ENCODE measurements at regions of chr5 and their contacts with region 1.

Region 1: DNA sequence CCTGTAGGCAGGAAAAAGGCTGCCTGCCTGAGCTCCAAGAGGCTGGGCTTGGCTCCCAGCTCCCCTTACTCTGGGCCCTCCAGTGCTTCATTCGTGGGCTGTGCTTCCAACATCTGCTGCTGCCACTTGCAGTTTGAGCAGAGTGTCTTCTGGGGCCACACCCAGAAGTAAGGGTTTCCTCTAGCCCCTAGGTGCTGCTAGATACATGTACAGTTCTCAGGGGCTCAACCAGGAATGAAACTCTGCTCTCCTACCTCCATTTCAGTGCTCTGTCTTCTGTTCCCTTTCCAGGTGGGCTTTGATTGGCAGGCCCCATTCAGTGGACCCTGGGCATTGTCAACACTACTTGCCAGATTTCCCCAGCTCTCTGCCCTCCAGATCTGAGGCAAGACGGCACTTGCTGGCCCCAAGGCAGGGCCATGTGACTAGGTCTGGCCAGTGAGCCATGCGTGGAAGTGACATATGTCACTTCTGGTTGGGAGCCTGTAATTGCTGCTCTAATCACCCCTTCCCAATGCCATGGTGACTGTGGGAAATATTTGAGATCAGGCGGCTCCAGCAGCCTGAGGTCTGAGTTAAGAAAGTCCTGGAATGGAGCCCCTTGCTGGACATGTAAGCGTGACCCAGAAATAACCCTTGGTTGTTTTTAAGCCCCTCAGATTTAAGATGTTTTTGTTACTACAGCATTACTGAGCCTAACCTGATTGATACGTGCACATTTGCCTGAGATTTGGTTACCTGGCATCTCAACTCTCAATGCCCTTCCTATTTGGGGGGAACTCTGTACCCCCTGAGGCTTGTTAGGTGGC is 9.4 kb upstream of the BOD1 start:
- DNase-seq: no peak
- ATAC-seq: peak in 2 of 4 donors; percentile 44 to 59
- H3K4me3 ChIP-seq: no peak overlapping the region
- H3K27ac ChIP-seq: no peak overlapping the region
- H3K4me1 ChIP-seq: no peaks in the 10 kb centered on the region
- H3K27me3 ChIP-seq: no peaks in the 10 kb centered on the region
- CTCF ChIP-seq: no peak

Region 2: DNA sequence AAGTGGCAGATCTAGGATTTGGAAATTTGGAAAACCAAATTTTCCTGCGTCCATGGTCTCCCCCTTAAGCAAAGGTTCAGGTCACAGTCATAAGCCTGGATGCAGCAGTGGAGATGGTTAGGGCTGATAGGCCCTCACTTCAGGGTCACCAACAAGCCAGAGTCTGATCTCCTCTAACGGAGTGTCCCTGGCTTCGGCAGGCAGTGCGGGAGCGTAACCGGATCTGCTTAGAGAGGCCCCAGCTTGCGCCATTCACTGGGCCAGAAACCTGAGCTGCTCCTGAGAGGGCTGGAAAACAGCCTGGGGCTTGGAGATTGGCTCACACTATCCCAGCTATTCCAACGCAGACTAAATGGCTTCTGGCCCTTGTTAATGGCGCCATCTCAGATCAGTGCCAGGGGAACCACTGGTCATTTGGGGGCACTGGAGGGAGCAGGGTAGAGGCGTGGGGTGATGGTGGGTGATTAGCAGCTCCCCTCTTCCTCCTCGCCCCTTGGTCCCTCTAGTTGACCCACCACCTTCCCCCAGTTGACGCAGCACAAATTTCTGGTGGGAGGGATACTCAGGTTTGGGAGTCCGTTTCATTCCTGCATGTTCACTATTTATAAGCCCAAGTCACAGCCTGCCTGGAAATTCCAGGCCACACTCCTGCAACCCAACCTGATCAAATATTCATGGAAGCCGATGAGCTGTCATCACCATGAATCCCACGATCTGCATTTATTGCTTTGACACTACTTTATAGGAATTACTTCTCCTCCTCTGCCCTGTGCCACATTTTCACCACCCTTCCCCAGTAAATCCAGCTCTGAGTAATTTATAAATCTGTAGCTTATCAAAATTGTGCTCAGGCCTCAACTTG is 127.6 kb after region 1 on chr5:
- intact Hi-C with region 1: loop called in 1 of 3 experiments (anchors 10 kb)
- DNase-seq: no peak
- ATAC-seq: no peak
- H3K4me3 ChIP-seq: no peak overlapping the region
- H3K27ac ChIP-seq: no peak overlapping the region
- H3K4me1 ChIP-seq: no peaks in the 10 kb centered on the region
- H3K27me3 ChIP-seq: no peaks in the 10 kb centered on the region
- CTCF ChIP-seq: no peak

Region 3: DNA sequence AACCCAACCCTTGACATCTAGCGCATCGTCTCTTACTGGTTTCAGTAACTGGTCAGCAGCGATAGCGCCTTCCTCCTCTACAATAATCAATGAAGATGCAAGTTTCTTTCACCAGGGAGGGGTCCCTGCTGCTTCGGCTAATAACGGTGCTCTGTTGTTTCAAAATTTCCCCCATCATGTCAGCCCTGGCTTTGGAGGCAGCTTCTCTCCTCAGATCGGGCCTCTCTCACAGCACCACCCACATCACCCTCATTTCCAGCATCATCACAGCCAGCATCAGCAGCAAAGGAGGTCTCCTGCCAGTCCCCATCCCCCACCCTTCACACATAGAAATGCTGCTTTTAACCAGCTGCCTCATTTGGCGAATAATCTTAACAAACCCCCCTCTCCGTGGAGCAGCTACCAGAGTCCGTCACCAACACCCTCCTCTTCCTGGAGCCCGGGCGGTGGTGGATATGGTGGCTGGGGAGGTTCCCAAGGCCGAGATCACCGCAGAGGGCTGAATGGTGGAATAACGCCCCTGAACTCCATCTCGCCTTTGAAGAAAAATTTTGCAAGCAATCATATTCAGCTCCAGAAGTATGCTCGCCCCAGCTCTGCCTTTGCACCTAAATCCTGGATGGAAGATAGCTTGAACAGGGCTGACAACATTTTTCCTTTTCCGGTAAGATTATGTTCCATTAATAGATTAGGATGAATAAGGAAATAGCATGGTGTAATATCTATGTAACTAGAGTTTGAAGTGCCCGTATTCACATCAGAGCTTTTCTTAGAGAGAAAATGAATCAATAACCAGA is 264.5 kb after region 1 on chr5:
- intact Hi-C with region 1: loop called in 1 of 3 experiments (anchors 10 kb)
- DNase-seq: peak; percentile 25 to 70 (median 50)
- ATAC-seq: peak in 3 of 4 donors; percentile 4 to 9 (median 7)
- H3K4me3 ChIP-seq: peak overlapping the region; percentile 2 to 82 (median 71)
- H3K27ac ChIP-seq: peak overlapping the region in 3 of 4 donors; percentile 59 to 97 (median 89)
- H3K4me1 ChIP-seq: peaks cover 4 to 27% (median 19%) of the 10 kb centered on the region in 3 donors
- H3K27me3 ChIP-seq: no peaks in the 10 kb centered on the region
- CTCF ChIP-seq: no peak

Region 4: DNA sequence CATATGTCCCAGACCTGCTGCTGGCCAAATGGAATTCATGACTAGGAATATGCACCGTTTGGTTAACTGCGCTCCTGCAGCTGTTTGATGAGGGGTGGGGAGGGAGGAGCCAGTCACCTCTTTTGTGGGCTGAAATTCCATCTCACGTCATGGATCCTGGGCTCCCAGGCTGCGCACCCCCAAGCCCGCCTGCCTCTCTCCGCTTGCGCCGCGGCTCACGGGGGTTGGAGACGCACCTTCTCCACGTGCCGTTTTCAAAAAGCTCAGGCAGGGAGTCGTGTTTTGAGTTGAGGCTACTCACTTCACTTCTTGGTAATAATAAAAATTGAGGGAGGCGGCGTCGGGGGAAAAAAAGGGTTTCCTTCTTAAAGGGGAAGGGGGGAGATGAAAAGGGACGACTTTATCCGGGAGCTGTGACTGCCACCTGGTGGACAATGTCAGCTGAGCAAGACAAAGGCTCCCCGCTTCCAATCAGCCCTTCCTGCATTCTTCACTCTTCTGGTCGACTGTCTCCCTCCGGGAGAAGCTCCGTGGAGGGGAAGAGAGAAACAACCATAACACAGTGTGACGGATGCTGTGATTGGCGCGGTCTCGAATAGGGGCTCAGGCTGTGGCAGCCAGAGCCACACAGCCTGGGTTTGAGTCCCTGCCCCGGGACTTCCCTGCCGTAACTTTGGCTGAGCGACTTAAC is 347.2 kb after region 1 on chr5:
- intact Hi-C with region 1: loop called in 1 of 3 experiments (anchors 5 kb)
- DNase-seq: peak; percentile 83 to 89 (median 86)
- ATAC-seq: peak; percentile 92 to 97 (median 95)
- H3K4me3 ChIP-seq: peak overlapping the region; percentile 26 to 54 (median 44)
- H3K27ac ChIP-seq: peak overlapping the region in 2 of 4 donors; percentile 71 to 74
- H3K4me1 ChIP-seq: peaks cover 0 to 3% (median 0%) of the 10 kb centered on the region in 3 donors
- H3K27me3 ChIP-seq: no peaks in the 10 kb centered on the region
- CTCF ChIP-seq: peak; percentile 77 to 85 (median 80)

Region 5: DNA sequence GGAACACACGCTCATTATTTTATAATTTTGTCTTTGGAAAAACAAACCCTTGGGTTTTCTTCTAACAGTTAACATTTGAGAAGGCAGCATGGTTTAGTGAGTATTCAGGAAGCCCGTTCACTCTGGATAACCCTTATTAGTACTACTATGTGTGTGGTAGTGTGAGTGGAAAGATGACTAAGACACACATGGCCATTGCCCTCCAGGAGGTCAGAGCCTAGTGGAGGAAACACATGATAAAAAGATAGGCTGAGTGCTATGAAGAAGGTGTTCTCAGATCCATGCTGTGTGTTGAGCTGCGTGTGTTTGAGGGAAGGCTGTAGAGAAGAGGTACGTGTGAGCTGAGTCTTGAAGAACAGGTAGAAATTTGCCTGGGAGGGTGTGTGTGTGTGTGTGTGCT is 371.4 kb after region 1 on chr5:
- intact Hi-C with region 1: no loop called
- DNase-seq: no peak
- ATAC-seq: no peak
- H3K4me3 ChIP-seq: no peak overlapping the region
- H3K27ac ChIP-seq: no peak overlapping the region
- H3K4me1 ChIP-seq: no peaks in the 10 kb centered on the region
- H3K27me3 ChIP-seq: no peaks in the 10 kb centered on the region
- CTCF ChIP-seq: no peak

Region 6: GRCh38 chr5:174311531-174312269 is 685.8 kb after region 1 on chr5:
- intact Hi-C with region 1: loop called in 1 of 3 experiments (anchors 5 kb)
- DNase-seq: peak; percentile 47 to 94 (median 76)
- ATAC-seq: peak; percentile 88 to 96 (median 96)
- H3K4me3 ChIP-seq: peak overlapping the region; percentile 5 to 49 (median 26)
- H3K27ac ChIP-seq: no peak overlapping the region
- H3K4me1 ChIP-seq: no peaks in the 10 kb centered on the region
- H3K27me3 ChIP-seq: no peaks in the 10 kb centered on the region
- CTCF ChIP-seq: peak; percentile 85 to 94 (median 90)

Measured in pancreas (tissue), 10 donors.